Activated naive CD4-positive, alpha-beta T cell treated with anti-CD3 and anti-CD28 coated beads for 36 hours (primary cell): ENCODE measurements at regions of chr11 and their contacts with region 1.

Region 1: DNA sequence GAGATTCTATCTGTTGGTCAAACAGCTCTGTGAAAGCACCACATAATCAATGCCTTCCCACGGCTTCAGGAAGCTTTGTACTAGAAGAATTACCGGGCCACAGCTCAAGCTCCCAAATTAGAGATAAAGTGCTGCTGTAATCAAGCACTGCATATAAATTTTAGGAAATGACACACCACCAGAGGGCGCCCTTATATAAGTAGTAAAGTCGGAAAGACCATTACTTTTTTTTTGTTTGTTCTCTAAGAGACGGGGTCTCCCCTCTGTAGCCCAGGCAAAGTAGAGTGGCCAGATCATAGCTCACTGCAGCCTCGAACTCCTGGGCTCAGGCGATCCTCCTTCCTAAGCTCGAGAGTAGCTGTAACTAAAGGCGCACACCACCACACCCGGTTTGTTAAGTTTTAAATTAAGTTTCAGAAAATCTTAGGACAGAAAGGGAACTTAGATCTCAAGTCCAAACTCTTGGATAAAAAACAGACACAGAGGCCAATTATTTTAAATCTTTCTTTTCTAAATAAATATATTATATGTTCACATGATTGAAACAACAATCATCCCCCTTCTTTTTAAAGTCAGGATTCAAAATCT is 32.6 kb downstream of the PRCP start:
- DNase-seq: peak; percentile 91
- H3K4me3 Mint-ChIP-seq: peak overlapping the region; percentile 15
- H3K27ac Mint-ChIP-seq: peak overlapping the region; percentile 31
- H3K4me1 Mint-ChIP-seq: peaks cover 9% of the 10 kb centered on the region
- H3K27me3 Mint-ChIP-seq: no peaks in the 10 kb centered on the region

Region 2: GRCh38 chr11:82733444-82734119 is 134.0 kb before region 1 on chr11 and contains the start of gene FAM181B:
- CTCF ChIA-PET with region 1: interaction called, 3 read pairs
- intact Hi-C with region 1: loop called (anchors 5 kb)
- DNase-seq: peak; percentile 53
- H3K4me3 Mint-ChIP-seq: peak within 1 kb of the TSS; percentile 68
- H3K27ac Mint-ChIP-seq: no peak within 1 kb of the TSS
- H3K4me1 Mint-ChIP-seq: peaks cover 14% of the 10 kb centered on the region
- H3K27me3 Mint-ChIP-seq: peaks cover 28% of the 10 kb centered on the region
- total RNA-seq, gene FAM181B: not detected

Region 3: DNA sequence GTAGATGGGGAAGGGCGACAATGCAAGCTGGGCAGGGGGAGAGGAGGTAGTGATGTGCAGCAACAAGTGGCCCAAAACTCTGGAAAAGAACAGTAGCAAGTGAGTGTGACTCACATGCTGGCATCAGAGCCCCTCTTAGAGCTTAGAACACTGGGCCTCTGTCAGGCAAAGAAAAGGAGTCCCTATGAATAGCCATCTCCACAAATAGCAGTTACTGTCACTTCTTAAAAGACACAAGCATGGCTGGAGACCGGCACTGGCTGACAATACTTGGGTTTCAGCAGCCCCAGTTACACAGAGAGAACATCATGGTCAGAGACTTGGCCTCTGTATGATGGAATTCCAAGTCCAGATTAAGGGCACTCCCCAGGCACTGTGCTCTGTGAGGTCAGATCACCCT is 25.6 kb before region 1 on chr11:
- CTCF ChIA-PET with region 1: interaction called, 11 read pairs
- intact Hi-C with region 1: no loop called
- DNase-seq: no peak
- H3K4me3 Mint-ChIP-seq: no peak overlapping the region
- H3K27ac Mint-ChIP-seq: no peak overlapping the region
- H3K4me1 Mint-ChIP-seq: no peaks in the 10 kb centered on the region
- H3K27me3 Mint-ChIP-seq: no peaks in the 10 kb centered on the region

Region 4: GRCh38 chr11:82927254-82927880 is 59.8 kb after region 1 on chr11:
- CTCF ChIA-PET with region 1: interaction called, 10 read pairs
- intact Hi-C with region 1: loop called (anchors 1 kb)
- DNase-seq: peak; percentile 33
- H3K4me3 Mint-ChIP-seq: no peak overlapping the region
- H3K27ac Mint-ChIP-seq: no peak overlapping the region
- H3K4me1 Mint-ChIP-seq: peaks cover 33% of the 10 kb centered on the region
- H3K27me3 Mint-ChIP-seq: no peaks in the 10 kb centered on the region

Region 5: DNA sequence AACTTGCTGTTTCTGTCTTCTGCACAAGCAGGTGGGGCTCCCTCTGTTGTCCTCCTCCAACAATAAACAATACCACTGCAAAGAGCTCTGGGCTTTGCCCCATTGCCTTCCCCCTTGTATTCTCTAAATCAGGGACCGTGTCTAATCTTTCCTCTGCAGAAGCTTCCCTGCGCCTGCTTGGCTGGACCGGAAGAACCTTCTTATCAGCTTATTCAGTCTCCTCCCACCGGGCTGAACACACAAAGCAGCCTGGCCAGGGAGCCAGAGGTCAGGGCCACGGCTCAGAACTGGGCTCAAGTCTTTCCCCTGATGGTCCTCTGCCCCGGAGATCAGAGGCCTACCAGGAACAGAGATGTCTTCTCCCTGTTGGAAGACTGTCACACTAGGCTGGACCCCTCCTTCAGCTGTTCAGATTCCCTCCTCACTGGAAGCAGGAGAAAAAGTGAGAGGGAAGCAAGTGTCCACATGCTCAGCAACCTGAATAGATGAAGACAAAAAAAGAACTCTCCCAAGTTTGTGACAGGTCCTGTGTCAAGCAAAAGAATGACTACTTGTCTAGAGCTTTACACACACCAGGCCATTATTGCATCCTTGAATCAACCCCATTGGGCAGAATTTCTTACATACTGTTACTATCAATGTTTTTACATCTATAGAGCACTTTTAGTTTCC is 140.5 kb after region 1 on chr11:
- CTCF ChIA-PET with region 1: no interaction called
- intact Hi-C with region 1: no loop called
- DNase-seq: no peak
- H3K4me3 Mint-ChIP-seq: no peak overlapping the region
- H3K27ac Mint-ChIP-seq: no peak overlapping the region
- H3K4me1 Mint-ChIP-seq: peaks cover 50% of the 10 kb centered on the region
- H3K27me3 Mint-ChIP-seq: no peaks in the 10 kb centered on the region

Region 6: GRCh38 chr11:83092488-83093384 is 225.1 kb after region 1 on chr11:
- CTCF ChIA-PET with region 1: no interaction called
- intact Hi-C with region 1: no loop called
- DNase-seq: no peak
- H3K4me3 Mint-ChIP-seq: no peak overlapping the region
- H3K27ac Mint-ChIP-seq: no peak overlapping the region
- H3K4me1 Mint-ChIP-seq: peaks cover 3% of the 10 kb centered on the region
- H3K27me3 Mint-ChIP-seq: no peaks in the 10 kb centered on the region

Region 7: GRCh38 chr11:83249972-83250593 is 382.5 kb after region 1 on chr11:
- CTCF ChIA-PET with region 1: interaction called, 51 read pairs
- intact Hi-C with region 1: loop called (anchors 1 kb)
- DNase-seq: peak; percentile 30
- H3K4me3 Mint-ChIP-seq: no peak overlapping the region
- H3K27ac Mint-ChIP-seq: no peak overlapping the region
- H3K4me1 Mint-ChIP-seq: no peaks in the 10 kb centered on the region
- H3K27me3 Mint-ChIP-seq: no peaks in the 10 kb centered on the region

Region 8: DNA sequence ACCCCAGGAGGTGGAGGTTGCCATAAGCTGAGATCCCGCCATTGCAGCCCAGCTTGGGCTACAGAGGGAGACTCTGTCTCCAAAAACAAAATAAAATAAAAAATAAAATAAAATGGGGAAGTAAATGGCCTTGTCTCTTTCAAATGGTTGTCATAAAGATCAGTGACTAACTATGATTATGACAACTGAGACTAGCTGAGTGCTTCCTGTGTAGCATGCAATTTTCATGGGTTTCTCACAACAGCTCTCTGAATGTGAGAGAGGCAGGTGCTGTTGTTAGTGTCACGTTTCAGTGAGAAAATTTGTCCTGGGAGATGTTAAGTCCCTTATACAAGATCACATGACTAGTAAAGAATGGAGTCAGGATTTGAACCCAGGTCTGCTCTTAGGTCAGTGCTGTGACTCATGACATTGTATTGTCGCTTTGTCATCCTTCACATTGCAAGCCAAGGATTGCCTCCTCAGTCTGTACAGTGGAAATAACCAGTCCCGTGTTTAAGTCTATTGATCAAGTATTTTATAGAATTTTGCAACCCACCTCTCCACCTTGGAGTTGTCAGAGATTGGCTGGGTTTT is 581.8 kb after region 1 on chr11:
- CTCF ChIA-PET with region 1: no interaction called
- intact Hi-C with region 1: loop called (anchors 10 kb)
- DNase-seq: no peak
- H3K4me3 Mint-ChIP-seq: no peak overlapping the region
- H3K27ac Mint-ChIP-seq: no peak overlapping the region
- H3K4me1 Mint-ChIP-seq: no peaks in the 10 kb centered on the region
- H3K27me3 Mint-ChIP-seq: no peaks in the 10 kb centered on the region